Activated CD4-positive, alpha-beta T cell treated with anti-CD3 and anti-CD28 coated beads, Interleukin-2, amount 10 ng/mL, durations not matched to agents 24 days and 14 days (primary cell): ENCODE measurements at regions of chr2 and their contacts with region 1.

Region 1: GRCh38 chr2:55693181-55694134 is at the start of gene PNPT1:
- DNase-seq: peak; percentile 99
- H3K4me3 Mint-ChIP-seq: peak within 1 kb of the TSS; percentile 98
- H3K27ac Mint-ChIP-seq: peak within 1 kb of the TSS; percentile 96
- H3K4me1 Mint-ChIP-seq: peaks cover 29% of the 10 kb centered on the region
- H3K27me3 Mint-ChIP-seq: peaks cover 6% of the 10 kb centered on the region
- total RNA-seq, gene PNPT1: 68.1 and 77.9 TPM in 2 replicates

Region 2: GRCh38 chr2:53786705-53787612 is 1906.5 kb before region 1 on chr2 and contains the starts of genes ASB3 and ERLEC1:
- intact Hi-C with region 1: loop called (anchors 5 kb)
- DNase-seq: peak; percentile 97
- H3K4me3 Mint-ChIP-seq: peak within 1 kb of the TSS; percentile 97
- H3K27ac Mint-ChIP-seq: peak within 1 kb of the TSS; percentile 96
- H3K4me1 Mint-ChIP-seq: peaks cover 30% of the 10 kb centered on the region
- H3K27me3 Mint-ChIP-seq: no peaks in the 10 kb centered on the region
- total RNA-seq, gene ASB3: 19.6 and 24.0 TPM in 2 replicates
- total RNA-seq, gene ERLEC1: 24.1 and 24.9 TPM in 2 replicates

Region 3: GRCh38 chr2:55419679-55420438 is 273.6 kb before region 1 on chr2 and contains the start of gene CCDC88A:
- intact Hi-C with region 1: loop called (anchors 5 kb)
- DNase-seq: peak; percentile 95
- H3K4me3 Mint-ChIP-seq: peak within 1 kb of the TSS; percentile 90
- H3K27ac Mint-ChIP-seq: peak within 1 kb of the TSS; percentile 70
- H3K4me1 Mint-ChIP-seq: peaks cover 17% of the 10 kb centered on the region
- H3K27me3 Mint-ChIP-seq: peaks cover 37% of the 10 kb centered on the region
- total RNA-seq, gene CCDC88A: 9.5 and 9.8 TPM in 2 replicates

Region 4: DNA sequence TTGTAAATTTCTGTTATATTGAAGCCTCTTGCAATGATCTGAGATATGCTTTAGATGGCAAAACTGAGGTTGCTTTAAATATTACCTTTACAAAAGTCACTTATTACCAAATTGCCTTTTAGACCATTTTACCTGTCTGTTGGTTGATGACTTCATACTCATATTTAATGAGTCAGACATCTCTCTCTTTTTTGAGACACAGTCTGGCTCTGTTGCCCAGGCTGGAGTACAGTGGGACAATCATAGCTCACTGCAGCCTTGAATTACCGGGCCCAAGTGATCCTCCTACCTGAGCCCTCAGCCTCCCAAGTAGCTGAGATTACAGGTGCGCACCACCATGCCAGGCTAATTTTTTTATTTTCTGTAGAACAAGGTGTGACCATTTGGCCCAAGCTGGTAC is 64.5 kb before region 1 on chr2:
- intact Hi-C with region 1: no loop called
- DNase-seq: no peak
- H3K4me3 Mint-ChIP-seq: no peak overlapping the region
- H3K27ac Mint-ChIP-seq: no peak overlapping the region
- H3K4me1 Mint-ChIP-seq: peaks cover 2% of the 10 kb centered on the region
- H3K27me3 Mint-ChIP-seq: no peaks in the 10 kb centered on the region

Region 5: GRCh38 chr2:55771612-55772011 is 78.2 kb after region 1 on chr2:
- intact Hi-C with region 1: no loop called
- DNase-seq: no peak
- H3K4me3 Mint-ChIP-seq: no peak overlapping the region
- H3K27ac Mint-ChIP-seq: no peak overlapping the region
- H3K4me1 Mint-ChIP-seq: no peaks in the 10 kb centered on the region
- H3K27me3 Mint-ChIP-seq: no peaks in the 10 kb centered on the region